ENCODE measurements at regions of chr13 and their contacts with region 1.

Region 1: GRCh38 chr13:26272621-26273020 is 18.7 kb downstream of the CDK8 start:
- DNase-seq: no peak
- H3K4me3 ChIP-seq: no peak overlapping the region
- H3K27ac ChIP-seq: no peak overlapping the region
- H3K4me1 ChIP-seq: no peaks in the 10 kb centered on the region
- H3K27me3 ChIP-seq: no peaks in the 10 kb centered on the region
- CTCF ChIP-seq: no peak
- POLR2A ChIP-seq: no peak

Region 2: GRCh38 chr13:26025196-26025595 is 247.4 kb before region 1 on chr13:
- CTCF ChIA-PET with region 1: no interaction called
- POLR2A ChIA-PET with region 1: no interaction called
- dilution Hi-C with region 1: no loop called
- intact Hi-C with region 1: loop called (anchors 5 kb)
- DNase-seq: no peak
- H3K4me3 ChIP-seq: no peak overlapping the region
- H3K27ac ChIP-seq: no peak overlapping the region
- H3K4me1 ChIP-seq: peaks cover 31% of the 10 kb centered on the region
- H3K27me3 ChIP-seq: no peaks in the 10 kb centered on the region
- CTCF ChIP-seq: no peak
- POLR2A ChIP-seq: no peak

Region 3: GRCh38 chr13:27270594-27271520 is 998.2 kb after region 1 on chr13 and contains the start of gene RASL11A:
- CTCF ChIA-PET with region 1: no interaction called
- POLR2A ChIA-PET with region 1: no interaction called
- dilution Hi-C with region 1: no loop called
- intact Hi-C with region 1: no loop called
- DNase-seq: peak; percentile 87
- H3K4me3 ChIP-seq: peak within 1 kb of the TSS; percentile 36 to 71 (median 67)
- H3K27ac ChIP-seq: peak within 1 kb of the TSS; percentile 12
- H3K4me1 ChIP-seq: peaks cover 16% of the 10 kb centered on the region
- H3K27me3 ChIP-seq: peaks cover 17 to 18% of the 10 kb centered on the region in 2 experiments
- CTCF ChIP-seq: peak; percentile 84 to 91
- POLR2A ChIP-seq: peak; percentile 75
- total RNA-seq, gene RASL11A: 1.3 and 2.1 TPM in 2 replicates

Measured in endothelial cell of umbilical vein (primary cell).